ENCODE measurements at regions of chr12 and their contacts with region 1.

Region 1: DNA sequence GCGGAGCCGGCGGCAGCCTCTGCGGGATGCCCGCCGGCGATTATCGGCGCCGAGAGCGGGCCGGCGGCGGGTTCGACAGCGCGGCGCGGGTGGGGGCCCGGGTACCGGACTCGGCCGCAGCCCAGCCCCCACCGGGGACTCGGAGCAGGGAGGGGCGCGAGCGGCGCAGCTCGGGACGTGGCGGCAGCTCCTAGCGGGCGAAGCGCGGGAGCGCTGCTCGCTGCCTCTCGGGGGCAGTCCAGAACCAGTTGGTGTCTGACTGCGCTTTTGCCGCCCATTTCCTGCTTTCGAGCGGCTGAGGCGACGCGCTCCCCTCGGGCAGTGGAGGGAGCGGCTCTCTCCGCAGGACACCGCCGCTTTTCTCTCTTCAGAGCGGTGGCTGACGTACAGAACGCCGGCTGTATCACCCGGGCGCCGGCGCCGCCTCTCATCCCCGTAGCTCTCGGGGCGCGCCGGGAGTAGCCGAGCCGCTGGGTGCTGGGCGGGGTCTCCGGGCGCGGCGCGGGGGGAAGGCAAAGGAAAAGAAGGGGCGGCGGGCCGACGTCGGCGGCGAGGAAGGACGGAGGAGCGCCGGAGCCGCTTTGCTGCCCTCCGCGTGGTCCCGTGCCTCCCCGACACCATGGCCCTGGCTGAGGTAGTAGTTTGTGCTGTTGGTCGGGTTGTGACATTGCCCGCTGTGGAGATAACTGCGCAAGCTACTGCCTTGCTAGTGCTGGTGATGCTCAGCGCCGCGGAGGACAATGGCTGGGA is 136.6 kb downstream of the MON2 start:
- DNase-seq: peak; percentile 83
- H3K4me3 Mint-ChIP-seq: peak overlapping the region; percentile 90
- H3K27ac Mint-ChIP-seq: peak overlapping the region; percentile 97
- H3K4me1 Mint-ChIP-seq: peaks cover 36% of the 10 kb centered on the region
- H3K27me3 Mint-ChIP-seq: no peaks in the 10 kb centered on the region

Region 2: DNA sequence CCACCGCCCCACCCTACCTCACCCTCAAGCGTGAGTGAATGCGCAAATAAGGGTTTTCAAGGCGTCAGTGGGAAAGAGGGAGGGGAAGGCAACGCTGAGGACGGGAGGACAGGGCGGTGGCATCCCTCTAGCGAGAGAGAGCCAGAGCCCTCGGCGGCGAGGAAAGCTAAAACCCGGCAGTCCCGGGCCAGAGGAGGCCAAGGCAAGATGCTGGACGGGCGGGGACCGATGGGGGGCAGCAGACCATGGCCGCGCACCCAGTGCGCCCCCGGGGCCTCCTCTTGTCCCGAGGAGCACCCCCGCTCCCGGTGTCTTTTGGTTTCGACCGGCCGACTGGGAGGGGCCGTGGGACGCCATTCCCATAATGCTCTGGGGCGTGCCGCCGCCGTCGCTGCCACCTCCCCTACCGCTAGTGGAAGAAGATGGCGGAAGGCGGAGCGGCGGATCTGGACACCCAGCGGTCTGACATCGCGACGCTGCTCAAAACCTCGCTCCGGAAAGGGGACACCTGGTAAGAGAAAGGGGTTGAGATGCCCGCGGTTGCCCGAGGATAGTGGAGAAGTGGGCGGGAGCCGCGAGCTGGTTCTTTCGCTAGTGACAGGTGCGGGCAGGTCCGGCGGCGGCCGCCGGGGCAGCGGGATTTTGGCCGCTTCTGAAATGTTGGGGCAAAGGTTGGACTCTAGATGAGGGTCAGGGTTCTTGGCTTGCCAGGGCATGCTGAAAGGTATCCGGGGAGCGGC is 343.1 kb before region 1 on chr12 and contains the start of gene USP15:
- CTCF ChIA-PET with region 1: no interaction called
- POLR2A ChIA-PET with region 1: interaction called, 21 read pairs
- DNase-seq: peak; percentile 96
- H3K4me3 Mint-ChIP-seq: peak within 1 kb of the TSS; percentile 95
- H3K27ac Mint-ChIP-seq: peak within 1 kb of the TSS; percentile 100
- H3K4me1 Mint-ChIP-seq: peaks cover 49% of the 10 kb centered on the region
- H3K27me3 Mint-ChIP-seq: no peaks in the 10 kb centered on the region
- total RNA-seq, gene USP15: 134 to 161 TPM

Region 3: DNA sequence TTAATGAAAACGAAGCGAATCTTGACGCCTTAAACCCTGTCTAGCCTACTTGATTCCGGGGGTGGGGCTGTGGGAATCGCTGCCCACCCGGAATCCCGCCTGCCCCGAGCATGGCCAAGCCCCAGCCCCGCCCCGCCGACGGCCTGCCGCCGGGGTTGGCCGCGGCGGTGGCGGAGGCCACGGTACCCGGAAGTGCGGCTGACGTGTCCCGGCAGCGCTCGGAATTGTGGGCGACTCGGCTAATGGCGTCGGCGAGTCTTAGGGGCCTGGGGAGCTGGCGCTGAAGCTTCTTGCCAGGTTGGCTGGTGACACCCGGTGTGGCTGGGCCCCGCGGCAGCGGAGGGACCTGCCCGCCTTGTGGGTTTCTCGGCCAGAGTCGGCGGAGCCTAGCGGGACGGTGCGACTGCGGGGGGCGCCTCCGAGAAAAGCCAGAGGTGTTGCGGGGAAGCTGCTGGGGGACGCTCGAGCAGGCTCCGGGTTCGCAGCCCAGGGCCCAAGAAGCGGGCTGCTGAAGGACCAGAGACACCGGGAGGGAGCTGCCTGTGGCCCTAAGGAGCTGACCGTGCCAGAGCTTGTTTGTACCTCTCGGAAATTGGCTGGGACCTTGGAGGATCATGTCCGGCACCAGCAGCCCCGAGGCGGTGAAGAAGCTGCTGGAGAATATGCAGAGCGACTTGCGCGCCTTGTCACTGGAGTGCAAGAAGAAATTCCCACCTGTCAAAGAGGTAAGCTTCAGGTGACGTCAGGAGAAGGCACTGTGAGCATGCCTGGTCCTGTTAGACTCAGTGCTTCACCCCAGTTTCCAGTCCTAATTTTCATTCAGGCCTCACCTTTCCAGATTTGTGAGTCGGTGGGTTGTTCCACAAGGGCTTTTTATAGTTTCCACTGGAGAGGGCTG is 136.4 kb before region 1 on chr12 and contains the start of gene MON2:
- CTCF ChIA-PET with region 1: interaction called, 3 read pairs
- POLR2A ChIA-PET with region 1: interaction called, 40 read pairs
- DNase-seq: peak; percentile 87
- H3K4me3 Mint-ChIP-seq: peak within 1 kb of the TSS; percentile 88
- H3K27ac Mint-ChIP-seq: peak within 1 kb of the TSS; percentile 88
- H3K4me1 Mint-ChIP-seq: peaks cover 25% of the 10 kb centered on the region
- H3K27me3 Mint-ChIP-seq: peaks cover 3% of the 10 kb centered on the region
- total RNA-seq, gene MON2: 42.0 to 45.0 TPM

Region 4: GRCh38 chr12:62588916-62589315 is 14.3 kb before region 1 on chr12:
- CTCF ChIA-PET with region 1: interaction called, 8 read pairs
- POLR2A ChIA-PET with region 1: interaction called, 31 read pairs
- DNase-seq: no peak
- H3K4me3 Mint-ChIP-seq: no peak overlapping the region
- H3K27ac Mint-ChIP-seq: no peak overlapping the region
- H3K4me1 Mint-ChIP-seq: no peaks in the 10 kb centered on the region
- H3K27me3 Mint-ChIP-seq: no peaks in the 10 kb centered on the region

Region 5: DNA sequence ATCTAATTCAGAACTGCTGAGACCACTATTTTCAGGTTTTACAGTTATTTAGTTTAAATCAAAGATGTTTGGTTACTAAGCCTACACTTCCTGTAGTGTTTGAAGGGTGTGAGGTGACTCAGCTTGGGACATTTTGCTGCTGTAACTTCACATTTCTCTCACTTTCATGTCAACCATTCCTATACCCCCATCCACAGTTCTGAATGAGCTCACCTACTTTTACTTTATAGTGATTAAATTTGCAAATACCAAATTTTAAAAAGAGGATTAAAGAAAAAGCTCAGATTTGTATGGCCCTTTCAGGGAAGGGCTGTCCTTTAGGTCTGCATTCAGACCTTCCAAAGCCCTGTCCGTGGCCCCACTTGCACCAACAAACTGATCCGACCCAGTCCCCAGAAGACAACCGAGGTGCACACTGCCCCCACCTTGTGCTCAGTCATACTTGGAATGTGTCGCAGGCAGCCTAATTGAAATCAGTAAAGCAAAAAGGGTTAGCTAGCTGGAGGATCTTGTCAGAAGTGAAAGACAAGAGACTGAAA is 37.7 kb after region 1 on chr12:
- CTCF ChIA-PET with region 1: interaction called, 6 read pairs
- POLR2A ChIA-PET with region 1: interaction called, 24 read pairs
- DNase-seq: peak; percentile 39
- H3K4me3 Mint-ChIP-seq: peak overlapping the region; percentile 37
- H3K27ac Mint-ChIP-seq: peak overlapping the region; percentile 63
- H3K4me1 Mint-ChIP-seq: peaks cover 16% of the 10 kb centered on the region
- H3K27me3 Mint-ChIP-seq: peaks cover 2% of the 10 kb centered on the region

Region 6: GRCh38 chr12:62793256-62794217 is 190.3 kb after region 1 on chr12:
- CTCF ChIA-PET with region 1: interaction called, 30 read pairs
- POLR2A ChIA-PET with region 1: interaction called, 17 read pairs
- DNase-seq: peak; percentile 74
- H3K4me3 Mint-ChIP-seq: no peak overlapping the region
- H3K27ac Mint-ChIP-seq: no peak overlapping the region
- H3K4me1 Mint-ChIP-seq: peaks cover 3% of the 10 kb centered on the region
- H3K27me3 Mint-ChIP-seq: peaks cover 5% of the 10 kb centered on the region

Measured in activated CD4-positive, alpha-beta memory T cell treated with anti-CD3 and anti-CD28 coated beads, Interleukin-2, amount 10 ng/mL, durations not matched to agents 7 days and 5 days (primary cell).